ENCODE measurements at regions of chr6 and their contacts with region 1.

Region 1: DNA sequence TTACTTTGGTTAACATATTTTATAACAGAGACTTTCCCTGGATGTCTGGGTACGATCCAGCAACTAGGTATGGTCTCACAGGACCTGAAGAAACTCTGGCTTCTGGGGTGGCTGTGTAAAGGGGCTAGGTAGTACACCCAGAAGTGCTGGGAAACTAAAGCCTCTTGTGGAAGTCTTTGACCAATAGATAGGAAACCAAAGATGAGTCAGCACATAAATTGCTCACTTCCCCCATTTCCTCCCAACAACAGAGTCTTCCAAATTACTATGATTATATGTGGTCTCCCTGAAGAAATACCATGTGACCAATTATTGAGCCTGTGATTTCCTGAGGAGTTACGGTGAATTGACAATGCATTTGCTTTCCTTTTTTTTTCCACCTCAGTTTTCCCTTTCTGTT is 26.8 kb upstream of the TBX18 start:
- DNase-seq: no peak
- H3K4me3 ChIP-seq: no peak overlapping the region
- H3K27ac ChIP-seq: no peak overlapping the region
- H3K27me3 ChIP-seq: no peaks in the 10 kb centered on the region
- CTCF ChIP-seq: no peak

Region 2: GRCh38 chr6:84546427-84546914 is 244.8 kb before region 1 on chr6:
- in situ Hi-C with region 1: no loop called
- DNase-seq: no peak
- H3K4me3 ChIP-seq: no peak overlapping the region
- H3K27ac ChIP-seq: no peak overlapping the region
- H3K27me3 ChIP-seq: no peaks in the 10 kb centered on the region
- CTCF ChIP-seq: no peak

Region 3: GRCh38 chr6:85004361-85004995 is 213.2 kb after region 1 on chr6:
- in situ Hi-C with region 1: no loop called
- DNase-seq: no peak
- H3K4me3 ChIP-seq: no peak overlapping the region
- H3K27ac ChIP-seq: no peak overlapping the region
- H3K27me3 ChIP-seq: no peaks in the 10 kb centered on the region
- CTCF ChIP-seq: no peak

Region 4: DNA sequence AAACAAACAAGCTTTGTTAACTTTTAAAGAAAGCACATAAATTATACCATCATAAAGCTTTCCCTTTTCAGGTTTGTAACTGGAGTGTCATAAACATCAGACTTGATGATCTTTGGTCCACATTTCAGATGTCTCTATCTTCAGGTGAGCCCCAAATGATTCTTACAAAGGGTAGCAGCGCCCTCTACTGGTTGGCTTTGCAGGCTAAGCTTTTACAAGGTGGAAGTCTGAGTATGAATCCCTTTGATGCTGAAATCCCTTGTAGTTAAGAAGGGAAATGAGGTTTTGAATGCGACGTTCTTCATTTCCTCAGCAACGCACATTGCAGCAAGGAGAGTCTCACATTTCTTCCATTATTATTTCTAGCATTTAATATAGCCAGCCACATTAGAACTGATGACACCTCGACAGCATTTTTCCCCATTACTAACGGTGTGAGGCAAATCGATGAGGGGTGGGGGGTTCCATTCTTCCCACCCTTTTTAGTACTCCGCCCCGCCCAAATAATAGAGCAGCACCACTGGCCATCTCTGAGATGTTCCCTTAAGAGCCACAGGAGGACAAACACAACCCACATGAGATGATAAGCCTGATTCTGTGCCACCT is 532.3 kb after region 1 on chr6:
- in situ Hi-C with region 1: loop called (anchors 25 kb)
- DNase-seq: peak; percentile 85
- H3K4me3 ChIP-seq: no peak overlapping the region
- H3K27ac ChIP-seq: no peak overlapping the region
- H3K27me3 ChIP-seq: no peaks in the 10 kb centered on the region
- CTCF ChIP-seq: peak; percentile 95

Measured in brain microvascular endothelial cell (primary cell).